Activated CD8-positive, alpha-beta memory T cell treated with anti-CD3 and anti-CD28 coated beads, Interleukin-2, amount 10 ng/mL, durations not matched to agents 7 days and 5 days (primary cell): ENCODE measurements at regions of chr3 and their contacts with region 1.

Region 1: DNA sequence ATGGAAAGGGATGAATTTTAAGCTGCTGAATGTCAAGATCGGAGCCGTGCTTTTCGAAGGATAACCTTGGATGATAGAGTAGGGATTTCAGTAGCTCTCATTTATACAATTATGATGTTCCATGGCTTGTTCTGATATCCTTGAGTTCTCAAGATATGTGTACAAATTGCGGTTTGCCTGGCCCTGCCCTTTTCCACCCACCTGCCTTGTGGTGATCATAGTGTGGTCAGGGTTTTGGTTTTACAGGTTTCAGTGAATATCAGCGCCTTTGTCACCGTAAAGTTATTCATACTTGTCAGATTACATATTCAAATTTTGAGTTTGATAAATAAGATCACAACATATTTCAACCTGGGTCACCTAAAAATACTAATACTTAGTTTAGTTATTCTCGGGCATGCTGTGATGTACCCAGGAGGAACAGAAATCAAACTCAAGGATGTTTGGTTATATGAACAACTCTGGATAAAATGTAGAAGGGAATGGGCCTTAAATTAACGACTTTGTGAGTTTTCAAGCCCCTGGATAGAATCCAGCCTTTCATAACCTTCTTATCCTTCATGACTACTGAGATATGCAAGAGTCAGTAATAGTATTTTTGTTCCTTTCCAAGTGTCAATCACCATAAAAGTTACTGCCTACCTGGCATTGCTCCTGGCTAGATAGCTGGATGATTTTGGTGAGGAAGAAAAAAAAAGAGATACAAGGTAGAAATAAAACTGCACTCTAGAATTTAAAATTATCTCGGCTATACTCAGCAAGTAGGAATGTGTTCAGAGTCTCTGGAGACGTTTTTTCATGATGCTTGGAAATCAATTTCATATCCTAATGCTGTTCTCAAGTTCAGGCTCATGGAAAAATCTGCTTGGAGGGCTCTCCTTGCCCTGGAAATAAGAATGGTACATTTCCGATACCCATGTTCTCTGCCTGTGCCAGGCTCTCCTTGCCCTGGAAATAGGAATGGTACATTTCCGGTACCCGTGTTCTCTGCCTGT is 209.2 kb upstream of the TPRG1 start:
- DNase-seq: peak; percentile 46
- ATAC-seq: no peak
- H3K4me3 Mint-ChIP-seq: no peak overlapping the region
- H3K27ac Mint-ChIP-seq: no peak overlapping the region
- H3K4me1 Mint-ChIP-seq: peaks cover 12% of the 10 kb centered on the region
- H3K27me3 Mint-ChIP-seq: peaks cover 11% of the 10 kb centered on the region

Region 2: DNA sequence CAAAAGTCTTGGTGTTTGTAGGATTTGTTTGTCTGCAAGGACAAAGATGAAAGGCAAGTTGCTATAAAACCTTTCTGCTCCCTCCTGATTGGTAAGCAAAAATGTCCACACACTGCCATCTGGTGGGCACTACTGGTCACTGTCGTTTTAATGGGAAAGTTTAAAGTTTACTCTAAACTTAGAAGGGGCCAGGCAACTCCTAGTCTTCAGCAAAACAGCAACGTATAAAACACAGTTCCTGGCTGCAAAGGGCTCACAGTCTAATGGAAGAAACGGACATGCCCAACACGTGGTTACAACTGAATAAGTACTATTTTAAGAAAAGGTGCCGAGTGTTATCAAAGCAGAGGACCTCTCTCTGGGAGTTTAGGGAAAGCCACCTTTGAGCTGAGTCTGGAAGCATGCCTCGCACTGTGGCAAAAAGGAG is 185.5 kb after region 1 on chr3:
- CTCF ChIA-PET with region 1: interaction called, 57 read pairs
- DNase-seq: peak; percentile 78
- ATAC-seq: peak; percentile 73
- H3K4me3 Mint-ChIP-seq: no peak overlapping the region
- H3K27ac Mint-ChIP-seq: no peak overlapping the region
- H3K4me1 Mint-ChIP-seq: peaks cover 32% of the 10 kb centered on the region
- H3K27me3 Mint-ChIP-seq: no peaks in the 10 kb centered on the region